ENCODE measurements at regions of chr2 and their contacts with region 1.

Region 1: DNA sequence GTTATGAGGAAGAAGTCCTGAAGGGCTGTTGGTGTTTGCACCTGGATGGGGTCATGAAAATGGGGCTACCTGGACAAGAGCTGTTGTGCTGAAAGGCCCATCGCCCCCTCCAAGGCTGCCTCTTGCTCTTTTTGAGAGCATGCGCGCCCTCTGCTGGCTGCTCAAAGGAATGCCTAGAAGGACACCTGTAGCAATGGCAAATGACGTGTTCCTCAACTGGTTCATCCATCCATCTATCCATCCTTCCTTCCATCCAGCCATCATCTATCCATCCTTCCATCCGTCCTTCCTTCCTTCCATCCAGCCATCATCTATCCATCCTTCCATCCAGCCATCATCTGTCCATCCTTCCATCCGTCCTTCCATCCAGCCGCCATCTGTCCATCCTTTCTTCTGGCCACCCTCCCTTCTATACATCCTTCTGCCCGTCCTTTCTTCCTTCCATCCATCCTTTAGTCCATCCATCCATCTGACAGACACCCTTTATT is 17.2 kb upstream of the RPL31 start:
- DNase-seq: peak; percentile 57 to 84 (median 67)
- H3K4me3 ChIP-seq: no peak overlapping the region
- H3K4me3 Mint-ChIP-seq: peak overlapping the region in 1 of 7 donors; percentile 34
- H3K27ac ChIP-seq: no peak overlapping the region
- H3K27ac Mint-ChIP-seq: peak overlapping the region in 2 of 8 donors; percentile 5 to 35
- H3K4me1 ChIP-seq: no peaks in the 10 kb centered on the region
- H3K4me1 Mint-ChIP-seq: peaks cover 0 to 3% (median 2%) of the 10 kb centered on the region in 3 donors
- H3K27me3 ChIP-seq: no peaks in the 10 kb centered on the region
- H3K27me3 Mint-ChIP-seq: no peaks in the 10 kb centered on the region

Region 2: GRCh38 chr2:100588071-100588786 is 396.7 kb before region 1 on chr2:
- CTCF ChIA-PET with region 1: interaction called, 10 read pairs
- POLR2A ChIA-PET with region 1: no interaction called
- DNase-seq: peak in 3 of 5 donors; percentile 52 to 75 (median 67)
- H3K4me3 ChIP-seq: no peak overlapping the region
- H3K4me3 Mint-ChIP-seq: peak overlapping the region in 2 of 7 donors; percentile 13 to 50
- H3K27ac ChIP-seq: no peak overlapping the region
- H3K27ac Mint-ChIP-seq: peak overlapping the region; percentile 38 to 93 (median 56)
- H3K4me1 ChIP-seq: peaks cover 11% of the 10 kb centered on the region
- H3K4me1 Mint-ChIP-seq: peaks cover 21 to 66% (median 34%) of the 10 kb centered on the region in 3 donors
- H3K27me3 ChIP-seq: no peaks in the 10 kb centered on the region
- H3K27me3 Mint-ChIP-seq: peaks cover 0 to 2% of the 10 kb centered on the region in 2 donors

Measured in CD8-positive, alpha-beta memory T cell (primary cell).